ENCODE measurements at regions of chr2 and their contacts with region 1.

Region 1: GRCh38 chr2:20611077-20611843 is 39.6 kb downstream of the HS1BP3 start:
- DNase-seq: peak; percentile 97
- ATAC-seq: peak; percentile 95
- H3K4me3 ChIP-seq: no peak overlapping the region
- H3K27ac ChIP-seq: 0 out of 2 replicates have a peak overlapping the region, but pooled peaks have one; percentile 1
- H3K4me1 ChIP-seq: peaks cover 16% of the 10 kb centered on the region
- H3K27me3 ChIP-seq: no peaks in the 10 kb centered on the region
- CTCF ChIP-seq: no peak
- POLR2A ChIP-seq: no peak
- RAD21 ChIP-seq: peak; percentile 10; the same call in 1 of the 2 replicates

Region 2: DNA sequence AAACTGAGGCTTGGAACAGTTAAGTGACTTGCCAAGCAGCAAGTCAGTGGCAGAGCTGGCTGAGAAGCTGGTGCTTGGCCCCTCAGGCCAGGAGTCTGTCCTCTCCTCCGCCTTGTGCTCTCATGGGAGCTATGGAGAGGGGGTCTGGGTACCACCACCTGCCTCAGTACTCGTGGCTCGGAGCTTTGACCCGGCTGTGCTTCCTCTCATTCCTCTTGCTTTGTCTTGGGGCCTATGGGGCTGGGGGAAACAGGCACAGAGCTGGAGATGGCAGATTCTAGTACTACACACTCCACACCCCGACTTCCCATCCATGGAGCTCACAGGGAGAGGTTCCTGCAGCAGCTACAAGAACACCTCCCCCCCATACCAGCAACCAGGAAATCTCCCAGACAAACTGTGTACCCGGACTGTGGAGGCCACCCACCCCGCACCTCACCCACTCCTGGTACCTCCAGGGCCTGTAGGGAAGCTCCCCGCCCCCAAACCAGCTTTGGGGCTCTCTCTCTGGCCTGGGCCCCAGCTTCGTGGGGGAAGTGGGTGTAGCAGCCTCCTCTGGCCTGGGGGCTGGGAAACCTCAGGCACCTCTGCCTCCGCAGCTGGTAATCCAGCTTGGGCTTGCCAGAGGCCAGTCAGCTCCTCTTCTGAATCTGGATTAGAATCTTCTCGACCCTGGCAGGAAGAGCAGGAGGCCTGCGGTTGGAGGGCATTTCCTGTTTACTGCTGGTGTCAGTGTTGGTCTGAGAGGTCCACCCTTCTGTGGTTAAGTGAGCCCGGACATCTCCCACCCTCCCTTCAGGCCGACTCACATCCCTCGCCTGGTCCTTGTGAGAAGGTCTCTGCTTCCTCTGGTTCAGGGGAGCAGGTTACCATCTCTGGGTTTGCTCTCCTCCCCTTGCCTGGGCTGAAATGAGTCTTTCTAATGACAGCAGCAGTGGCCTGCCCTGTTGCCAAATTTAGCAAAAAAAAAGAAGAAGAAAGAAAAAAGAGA is 186.7 kb before region 1 on chr2:
- CTCF ChIA-PET with region 1: no interaction called
- POLR2A ChIA-PET with region 1: no interaction called
- dilution Hi-C with region 1: no loop called
- in situ Hi-C with region 1: no loop called
- intact Hi-C with region 1: no loop called
- DNase-seq: peak; percentile 93
- ATAC-seq: peak; percentile 81
- H3K4me3 ChIP-seq: no peak overlapping the region
- H3K27ac ChIP-seq: peak overlapping the region; percentile 68
- H3K4me1 ChIP-seq: peaks cover 35% of the 10 kb centered on the region
- H3K27me3 ChIP-seq: no peaks in the 10 kb centered on the region
- CTCF ChIP-seq: no peak
- POLR2A ChIP-seq: peak; percentile 27; the same call in 1 of the 2 replicates
- RAD21 ChIP-seq: no peak

Region 3: GRCh38 chr2:20507166-20507692 is 104.0 kb before region 1 on chr2:
- CTCF ChIA-PET with region 1: no interaction called
- POLR2A ChIA-PET with region 1: no interaction called
- dilution Hi-C with region 1: no loop called
- in situ Hi-C with region 1: no loop called
- intact Hi-C with region 1: loop called (anchors 5 kb)
- DNase-seq: peak; percentile 37
- ATAC-seq: no peak
- H3K4me3 ChIP-seq: no peak overlapping the region
- H3K27ac ChIP-seq: no peak overlapping the region
- H3K4me1 ChIP-seq: peaks cover 6% of the 10 kb centered on the region; the same call in 1 of the 2 replicates
- H3K27me3 ChIP-seq: no peaks in the 10 kb centered on the region
- CTCF ChIP-seq: no peak
- POLR2A ChIP-seq: no peak
- RAD21 ChIP-seq: no peak

Region 4: GRCh38 chr2:21367421-21367820 is 756.2 kb after region 1 on chr2:
- CTCF ChIA-PET with region 1: no interaction called
- POLR2A ChIA-PET with region 1: no interaction called
- dilution Hi-C with region 1: no loop called
- in situ Hi-C with region 1: no loop called
- intact Hi-C with region 1: no loop called
- DNase-seq: peak; percentile 69
- ATAC-seq: no peak
- H3K4me3 ChIP-seq: no peak overlapping the region
- H3K27ac ChIP-seq: no peak overlapping the region
- H3K4me1 ChIP-seq: no peaks in the 10 kb centered on the region
- H3K27me3 ChIP-seq: no peaks in the 10 kb centered on the region
- CTCF ChIP-seq: no peak
- POLR2A ChIP-seq: no peak
- RAD21 ChIP-seq: no peak